Heart right ventricle (tissue), 16 donors: ENCODE measurements at regions of chr7 and their contacts with region 1.

Region 1: DNA sequence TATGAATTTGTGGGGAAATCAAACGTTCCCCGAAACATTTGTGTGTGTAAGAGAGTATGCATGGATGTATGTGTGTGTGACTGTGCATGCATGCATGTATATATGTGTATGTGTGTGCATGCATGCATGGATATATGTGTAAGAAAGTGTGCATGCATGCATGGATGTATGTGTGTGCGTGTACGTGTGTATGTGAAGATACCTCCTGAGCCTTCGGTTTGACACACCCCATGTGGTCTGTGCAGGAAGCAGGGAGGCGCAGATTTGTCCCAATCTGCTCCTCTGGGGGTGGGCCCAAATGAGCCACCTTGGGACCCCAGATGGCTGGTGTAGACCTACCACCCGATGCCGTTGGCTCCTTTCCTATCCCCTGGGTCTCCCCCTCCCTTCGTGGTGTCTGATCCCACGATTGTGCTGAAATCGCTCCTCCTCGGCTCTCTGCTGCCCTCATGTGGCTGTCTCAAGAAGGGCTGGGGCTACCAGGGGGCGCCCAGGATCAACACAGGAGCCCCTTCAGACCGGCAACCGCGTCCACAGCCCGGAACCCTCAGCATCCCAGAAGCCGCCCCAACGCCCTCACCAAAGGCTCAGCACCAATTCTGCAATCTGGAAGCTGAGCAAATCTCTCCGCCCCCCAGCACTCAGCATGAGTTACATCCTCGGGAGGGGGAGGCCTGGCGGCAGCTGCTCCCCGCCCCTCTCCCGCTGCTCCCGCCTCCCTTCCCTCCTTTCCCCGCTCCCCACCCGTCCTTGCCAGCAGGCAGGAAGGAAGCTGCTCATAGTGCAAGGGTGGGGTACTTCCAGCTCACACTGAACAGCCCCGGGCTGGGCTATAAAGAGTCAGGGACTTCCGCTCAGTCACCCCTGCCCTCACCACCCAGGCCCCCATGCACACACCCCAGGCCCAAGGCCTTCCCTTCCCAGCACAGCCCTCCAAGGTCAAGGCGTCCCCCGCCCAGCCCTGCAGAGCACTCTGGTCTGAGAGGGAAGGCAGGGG is 2.3 kb upstream of the NOS3 start:
- DNase-seq: peak; percentile 77 to 83
- ATAC-seq: peak; percentile 45 to 78 (median 67)
- H3K4me3 ChIP-seq: peak overlapping the region in 3 of 10 donors; percentile 10 to 33 (median 18)
- H3K27ac ChIP-seq: peak overlapping the region; percentile 57 to 90 (median 84)
- H3K4me1 ChIP-seq: peaks cover 8 to 57% (median 30%) of the 10 kb centered on the region in 9 donors
- H3K27me3 ChIP-seq: peaks cover 0 to 22% (median 0%) of the 10 kb centered on the region in 7 donors
- CTCF ChIP-seq: peak; percentile 82 to 96 (median 93)

Region 2: DNA sequence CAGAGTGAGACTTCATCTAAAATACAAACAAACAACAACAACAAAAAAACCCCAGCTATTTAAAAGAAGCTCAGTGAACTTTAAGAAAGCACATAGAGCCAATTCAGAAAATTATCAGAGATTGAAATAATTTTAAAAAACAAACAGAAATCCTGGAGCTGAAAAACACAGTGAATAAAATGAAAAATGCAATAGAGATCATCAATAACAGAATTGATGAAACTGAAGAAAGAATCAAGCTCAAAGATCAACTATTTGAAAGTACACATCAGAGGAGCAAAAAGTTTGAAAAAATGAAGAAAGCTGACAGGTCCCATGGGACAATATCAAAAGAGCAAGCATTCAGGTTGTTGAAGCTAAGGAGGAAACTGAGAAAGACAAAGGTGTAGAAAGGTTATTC is 1478.8 kb before region 1 on chr7:
- intact Hi-C with region 1: no loop called
- DNase-seq: no peak
- ATAC-seq: no peak
- H3K4me3 ChIP-seq: no peak overlapping the region
- H3K27ac ChIP-seq: no peak overlapping the region
- H3K4me1 ChIP-seq: no peaks in the 10 kb centered on the region
- H3K27me3 ChIP-seq: no peaks in the 10 kb centered on the region
- CTCF ChIP-seq: no peak

Region 3: GRCh38 chr7:150778738-150779301 is 209.7 kb before region 1 on chr7:
- intact Hi-C with region 1: loop called in 6 of 10 experiments (anchors 2 to 10 kb)
- DNase-seq: peak; percentile 85 to 87
- ATAC-seq: peak; percentile 74 to 94 (median 89)
- H3K4me3 ChIP-seq: no peak overlapping the region
- H3K27ac ChIP-seq: no peak overlapping the region
- H3K4me1 ChIP-seq: peaks cover 0 to 31% (median 0%) of the 10 kb centered on the region in 9 donors
- H3K27me3 ChIP-seq: no peaks in the 10 kb centered on the region
- CTCF ChIP-seq: peak; percentile 78 to 95 (median 90)

Region 4: GRCh38 chr7:150787321-150788281 is 200.9 kb before region 1 on chr7:
- intact Hi-C with region 1: loop called in 3 of 10 experiments (anchors 5 to 10 kb)
- DNase-seq: peak; percentile 27 to 55
- ATAC-seq: peak; percentile 27 to 61 (median 52)
- H3K4me3 ChIP-seq: peak overlapping the region in 1 of 10 donors; percentile 8
- H3K27ac ChIP-seq: peak overlapping the region; percentile 3 to 91 (median 84)
- H3K4me1 ChIP-seq: peaks cover 11 to 68% (median 54%) of the 10 kb centered on the region in 9 donors
- H3K27me3 ChIP-seq: no peaks in the 10 kb centered on the region
- CTCF ChIP-seq: peak in 4 of 9 donors; percentile 13 to 41 (median 32)

Region 5: GRCh38 chr7:150799741-150800580 is 188.6 kb before region 1 on chr7 and contains the start of gene TMEM176B:
- intact Hi-C with region 1: loop called in 1 of 10 experiments (anchors 10 kb)
- DNase-seq: peak; percentile 50 to 72
- ATAC-seq: peak; percentile 82 to 90 (median 88)
- H3K4me3 ChIP-seq: peak within 1 kb of the TSS; percentile 42 to 76 (median 66)
- H3K27ac ChIP-seq: peak within 1 kb of the TSS in 9 of 10 donors; percentile 40 to 81 (median 66)
- H3K4me1 ChIP-seq: peaks cover 0 to 44% (median 17%) of the 10 kb centered on the region in 9 donors
- H3K27me3 ChIP-seq: peaks cover 0 to 50% (median 25%) of the 10 kb centered on the region in 7 donors
- CTCF ChIP-seq: no peak
- total RNA-seq, gene TMEM176B: 19.6 to 149 (median 52.6) TPM

Region 6: GRCh38 chr7:150898475-150899011 is 90.0 kb before region 1 on chr7:
- intact Hi-C with region 1: loop called (anchors 1 to 2 kb)
- DNase-seq: peak; percentile 74 to 81
- ATAC-seq: peak; percentile 48 to 87 (median 68)
- H3K4me3 ChIP-seq: no peak overlapping the region
- H3K27ac ChIP-seq: no peak overlapping the region
- H3K4me1 ChIP-seq: peaks cover 0 to 25% (median 9%) of the 10 kb centered on the region in 9 donors
- H3K27me3 ChIP-seq: peaks cover 0 to 53% (median 32%) of the 10 kb centered on the region in 7 donors
- CTCF ChIP-seq: peak; percentile 84 to 97 (median 95)

Region 7: GRCh38 chr7:150903606-150904005 is 84.9 kb before region 1 on chr7:
- intact Hi-C with region 1: loop called (anchors 1 to 2 kb)
- DNase-seq: peak; percentile 77 to 82
- ATAC-seq: peak; percentile 75 to 98 (median 94)
- H3K4me3 ChIP-seq: no peak overlapping the region
- H3K27ac ChIP-seq: peak overlapping the region in 8 of 10 donors; percentile 2 to 71 (median 46)
- H3K4me1 ChIP-seq: peaks cover 0 to 35% (median 11%) of the 10 kb centered on the region in 9 donors
- H3K27me3 ChIP-seq: peaks cover 0 to 55% (median 17%) of the 10 kb centered on the region in 7 donors
- CTCF ChIP-seq: peak in 3 of 9 donors; percentile 14 to 22 (median 17)

Region 8: GRCh38 chr7:150962553-150963399 is 25.8 kb before region 1 on chr7:
- intact Hi-C with region 1: loop called in 4 of 10 experiments (anchors 1 to 2 kb)
- DNase-seq: peak; percentile 69 to 70
- ATAC-seq: peak; percentile 43 to 72 (median 54)
- H3K4me3 ChIP-seq: no peak overlapping the region
- H3K27ac ChIP-seq: peak overlapping the region; percentile 57 to 93 (median 88)
- H3K4me1 ChIP-seq: peaks cover 12 to 94% (median 50%) of the 10 kb centered on the region in 9 donors
- H3K27me3 ChIP-seq: peaks cover 0 to 53% (median 21%) of the 10 kb centered on the region in 7 donors
- CTCF ChIP-seq: peak; percentile 67 to 92 (median 88)

Region 9: DNA sequence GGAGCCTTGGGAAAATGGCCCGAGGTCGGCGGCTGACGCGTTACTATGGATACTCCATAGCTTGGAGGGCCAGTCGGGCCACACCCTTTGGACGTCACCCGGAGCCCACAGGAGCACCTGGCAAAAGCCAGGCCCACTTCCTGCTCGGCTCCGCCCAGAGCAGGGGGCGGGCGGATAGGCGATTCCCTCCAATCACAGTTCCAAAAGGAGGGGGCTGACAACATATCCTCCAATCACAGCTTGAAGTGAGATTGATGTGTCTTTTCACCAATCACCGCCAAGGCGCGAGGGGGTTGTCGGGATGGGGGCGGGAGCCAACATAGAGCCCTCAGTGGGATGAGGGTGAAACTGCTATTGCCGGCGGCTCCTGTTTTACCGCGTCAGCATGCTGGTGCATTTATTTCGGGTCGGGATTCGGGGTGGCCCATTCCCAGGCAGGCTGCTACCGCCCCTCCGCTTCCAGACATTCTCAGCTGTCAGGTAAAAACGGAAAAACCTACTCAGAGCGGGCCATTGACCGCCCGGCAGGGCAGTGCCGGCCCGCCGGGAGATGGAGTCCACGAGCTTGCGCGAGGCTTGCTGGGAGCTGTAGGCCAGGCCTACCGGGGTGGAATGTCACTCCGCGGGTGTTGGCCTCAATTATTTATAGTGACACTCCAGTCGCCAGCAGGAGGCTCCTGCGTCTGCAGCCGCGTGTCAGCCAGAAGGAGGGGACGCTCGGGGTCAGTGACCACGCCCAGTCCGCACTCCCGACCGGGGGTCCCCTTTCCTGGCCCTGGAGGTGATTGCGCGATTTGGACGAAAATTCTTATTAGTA is 39.8 kb after region 1 on chr7 and contains the start of gene ABCB8:
- intact Hi-C with region 1: no loop called
- DNase-seq: peak; percentile 95 to 100
- ATAC-seq: peak; percentile 94 to 98 (median 96)
- H3K4me3 ChIP-seq: peak within 1 kb of the TSS; percentile 29 to 84 (median 74)
- H3K27ac ChIP-seq: peak within 1 kb of the TSS; percentile 36 to 91 (median 82)
- H3K4me1 ChIP-seq: peaks cover 3 to 21% (median 14%) of the 10 kb centered on the region in 9 donors
- H3K27me3 ChIP-seq: peaks cover 0 to 3% (median 0%) of the 10 kb centered on the region in 7 donors
- CTCF ChIP-seq: peak in 8 of 9 donors; percentile 39 to 82 (median 64)
- total RNA-seq, gene ABCB8: 20.9 to 32.4 (median 24.6) TPM